OCI-LY7 (cell line): ENCODE measurements at regions of chr2 and their contacts with region 1.

Region 1: DNA sequence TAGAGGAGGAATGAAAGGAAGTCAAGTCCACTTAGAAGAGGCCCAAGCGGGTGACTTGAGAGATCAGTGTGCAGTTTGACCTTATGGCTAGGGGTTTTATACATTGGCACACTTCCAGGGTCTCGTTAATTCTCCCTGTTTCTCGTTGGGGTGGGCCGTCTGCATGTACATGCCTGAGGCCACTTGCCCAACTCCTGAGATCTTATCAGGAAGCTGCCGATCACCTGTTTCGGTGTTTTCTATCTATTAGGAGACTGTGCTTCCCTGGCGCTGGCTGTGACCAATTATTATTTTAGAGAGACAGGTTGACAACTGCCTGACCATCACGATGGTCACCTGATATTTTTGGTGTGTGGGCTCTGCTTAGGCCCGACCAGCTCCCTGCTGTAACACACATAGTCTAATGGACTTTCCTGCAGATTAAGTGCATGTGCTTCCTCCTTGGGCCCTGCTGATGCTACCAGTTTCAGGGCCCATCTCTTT is 31.0 kb upstream of the MSH6 start:
- DNase-seq: no peak
- H3K4me3 ChIP-seq: no peak overlapping the region
- H3K27ac ChIP-seq: peak overlapping the region; percentile 79
- H3K4me1 ChIP-seq: peaks cover 67% of the 10 kb centered on the region
- CTCF ChIP-seq: no peak

Region 2: GRCh38 chr2:47360927-47361326 is 391.0 kb before region 1 on chr2:
- CTCF ChIA-PET with region 1: no interaction called
- POLR2A ChIA-PET with region 1: no interaction called
- intact Hi-C with region 1: no loop called
- DNase-seq: no peak
- H3K4me3 ChIP-seq: no peak overlapping the region
- H3K27ac ChIP-seq: no peak overlapping the region
- H3K4me1 ChIP-seq: no peaks in the 10 kb centered on the region
- CTCF ChIP-seq: no peak

Region 3: GRCh38 chr2:47735136-47735869 is 16.6 kb before region 1 on chr2:
- CTCF ChIA-PET with region 1: interaction called, 5 read pairs
- POLR2A ChIA-PET with region 1: interaction called, 11 read pairs
- intact Hi-C with region 1: no loop called
- DNase-seq: no peak
- H3K4me3 ChIP-seq: peak overlapping the region; percentile 28
- H3K27ac ChIP-seq: peak overlapping the region; percentile 94
- H3K4me1 ChIP-seq: peaks cover 82% of the 10 kb centered on the region
- CTCF ChIP-seq: 0 out of 2 replicates have a peak, but pooled peaks have one; percentile 5